Left ventricle myocardium inferior (tissue), 1 donor: ENCODE measurements at regions of chr4 and their contacts with region 1.

Region 1: DNA sequence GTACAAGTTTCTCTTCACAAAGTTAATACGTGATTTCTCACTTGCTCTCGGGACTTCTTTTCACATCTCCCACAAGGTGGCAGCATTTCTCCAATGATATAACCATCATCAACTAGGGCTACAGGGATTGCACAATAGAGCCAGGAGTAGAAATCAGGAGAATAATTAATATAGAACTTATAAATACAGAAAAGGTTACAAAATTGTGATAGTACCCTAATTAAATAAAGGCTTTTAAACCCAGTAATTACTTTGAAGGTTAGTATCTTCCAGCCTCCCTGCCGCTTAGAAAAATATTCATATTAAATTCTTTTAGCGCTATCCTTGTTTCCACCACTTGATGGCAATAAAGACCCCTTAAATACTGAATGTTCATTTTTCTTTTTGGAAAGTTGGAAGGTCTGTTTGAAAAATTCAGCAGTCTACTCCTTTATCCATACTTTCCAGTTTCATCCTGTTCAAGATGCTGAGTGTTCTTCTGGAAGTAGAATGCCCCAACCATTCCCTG is 65.8 kb downstream of the RASGEF1B start:
- DNase-seq: no peak
- H3K4me3 ChIP-seq: peak overlapping the region; percentile 28
- H3K27ac ChIP-seq: no peak overlapping the region
- H3K4me1 ChIP-seq: peaks cover 4% of the 10 kb centered on the region
- H3K27me3 ChIP-seq: no peaks in the 10 kb centered on the region
- CTCF ChIP-seq: peak; percentile 78

Region 2: GRCh38 chr4:80705311-80705710 is 700.6 kb before region 1 on chr4:
- intact Hi-C with region 1: no loop called
- DNase-seq: no peak
- H3K4me3 ChIP-seq: no peak overlapping the region
- H3K27ac ChIP-seq: no peak overlapping the region
- H3K4me1 ChIP-seq: no peaks in the 10 kb centered on the region
- H3K27me3 ChIP-seq: no peaks in the 10 kb centered on the region
- CTCF ChIP-seq: no peak

Region 3: DNA sequence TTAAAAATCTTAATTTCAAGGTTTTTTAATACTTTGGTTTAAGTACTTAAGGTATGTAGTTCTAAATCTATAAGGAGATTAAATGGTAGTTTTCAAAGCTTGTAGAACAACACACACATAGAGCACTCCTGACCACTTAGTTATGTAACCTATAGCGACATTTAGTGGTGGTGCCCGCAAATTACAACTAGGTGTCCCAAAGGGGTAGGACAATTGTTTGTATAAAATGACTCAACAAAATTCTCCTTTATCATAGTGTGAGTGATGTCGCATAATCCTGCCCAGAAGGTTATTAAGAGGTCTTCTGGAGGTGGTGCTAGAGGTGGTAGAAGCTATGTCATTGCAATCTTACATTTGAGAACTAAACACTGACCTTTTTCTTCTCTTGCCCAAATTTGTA is 438.8 kb after region 1 on chr4:
- intact Hi-C with region 1: loop called (anchors 10 kb)
- DNase-seq: peak; percentile 49
- H3K4me3 ChIP-seq: no peak overlapping the region
- H3K27ac ChIP-seq: no peak overlapping the region
- H3K4me1 ChIP-seq: peaks cover 11% of the 10 kb centered on the region
- H3K27me3 ChIP-seq: peaks cover 5% of the 10 kb centered on the region
- CTCF ChIP-seq: peak; percentile 84

Region 4: GRCh38 chr4:82201805-82202641 is 796.1 kb after region 1 on chr4:
- intact Hi-C with region 1: loop called (anchors 5 kb)
- DNase-seq: no peak
- H3K4me3 ChIP-seq: no peak overlapping the region
- H3K27ac ChIP-seq: no peak overlapping the region
- H3K4me1 ChIP-seq: no peaks in the 10 kb centered on the region
- H3K27me3 ChIP-seq: no peaks in the 10 kb centered on the region
- CTCF ChIP-seq: peak; percentile 61

Region 5: GRCh38 chr4:82268050-82268825 is 862.3 kb after region 1 on chr4:
- intact Hi-C with region 1: loop called (anchors 10 kb)
- DNase-seq: peak; percentile 28
- H3K4me3 ChIP-seq: peak overlapping the region; percentile 11
- H3K27ac ChIP-seq: peak overlapping the region; percentile 44
- H3K4me1 ChIP-seq: peaks cover 5% of the 10 kb centered on the region
- H3K27me3 ChIP-seq: no peaks in the 10 kb centered on the region
- CTCF ChIP-seq: peak; percentile 80